Heart left ventricle (tissue), 16 donors: ENCODE measurements at regions of chr1 and their contacts with region 1.

Region 1: DNA sequence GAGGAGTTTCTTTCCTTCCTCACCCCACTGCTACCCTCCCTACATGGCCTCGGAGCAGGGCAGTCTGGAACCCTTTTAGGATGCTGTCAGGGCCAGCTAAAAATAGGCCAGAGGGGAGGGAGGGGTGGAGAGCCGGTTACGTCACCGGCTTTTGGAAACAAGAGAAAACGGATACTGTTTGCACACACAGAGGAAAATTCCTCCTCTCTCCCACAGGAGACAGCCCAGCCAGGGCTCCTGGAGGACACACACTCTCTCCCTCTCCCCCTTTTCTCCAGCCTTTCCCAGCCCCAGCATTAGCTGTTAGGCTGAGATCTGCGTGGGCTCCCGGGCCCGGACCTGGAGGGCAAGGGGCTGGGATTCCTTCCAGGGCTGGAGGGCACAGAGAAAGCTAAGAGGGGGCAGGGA is 20.0 kb upstream of the ALDH4A1 start:
- DNase-seq: peak; percentile 83 to 91 (median 90)
- ATAC-seq: peak; percentile 86 to 89 (median 88)
- H3K4me3 ChIP-seq: peak overlapping the region in 8 of 12 donors; percentile 4 to 40 (median 18)
- H3K27ac ChIP-seq: peak overlapping the region; percentile 57 to 97 (median 92)
- H3K4me1 ChIP-seq: peaks cover 17 to 59% (median 50%) of the 10 kb centered on the region in 12 donors
- H3K27me3 ChIP-seq: no peaks in the 10 kb centered on the region
- CTCF ChIP-seq: peak in 5 of 12 donors; percentile 15 to 32 (median 19)
- POLR2A ChIP-seq: peak in 1 of 2 donors; percentile 78

Region 2: DNA sequence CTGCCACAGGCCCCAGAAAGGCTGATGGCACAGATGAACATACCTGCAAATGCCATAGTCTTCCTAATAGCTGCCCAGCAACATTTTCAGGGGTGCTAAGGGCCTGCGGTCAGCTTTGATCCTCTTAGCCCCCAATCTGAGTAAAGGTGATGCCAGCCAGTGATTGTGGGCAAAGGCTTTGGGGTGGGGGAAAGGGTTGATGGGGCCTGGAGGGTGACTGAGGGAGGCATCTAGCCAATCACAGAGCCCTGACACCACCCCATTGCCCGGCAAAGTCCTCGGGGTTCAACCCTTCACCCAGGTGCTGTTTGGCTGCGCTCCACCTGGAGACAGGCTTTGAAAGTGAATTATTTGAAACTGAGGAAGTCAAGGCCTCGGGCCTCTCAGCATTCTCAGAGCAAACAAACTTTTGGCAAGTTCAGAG is 255.9 kb before region 1 on chr1:
- intact Hi-C with region 1: no loop called
- DNase-seq: no peak
- ATAC-seq: no peak
- H3K4me3 ChIP-seq: no peak overlapping the region
- H3K27ac ChIP-seq: no peak overlapping the region
- H3K4me1 ChIP-seq: no peaks in the 10 kb centered on the region
- H3K27me3 ChIP-seq: peaks cover 3 to 64% (median 11%) of the 10 kb centered on the region in 9 donors
- CTCF ChIP-seq: no peak
- POLR2A ChIP-seq: no peak

Region 3: GRCh38 chr1:18941221-18942141 is 19.2 kb after region 1 on chr1:
- intact Hi-C with region 1: loop called in 1 of 10 experiments (anchors 2 kb)
- DNase-seq: peak in 1 of 5 donors; percentile 51
- ATAC-seq: peak; percentile 50 to 83 (median 56)
- H3K4me3 ChIP-seq: no peak overlapping the region
- H3K27ac ChIP-seq: peak overlapping the region in 11 of 12 donors; percentile 54 to 80 (median 72)
- H3K4me1 ChIP-seq: peaks cover 12 to 76% (median 61%) of the 10 kb centered on the region in 12 donors
- H3K27me3 ChIP-seq: no peaks in the 10 kb centered on the region
- CTCF ChIP-seq: no peak
- POLR2A ChIP-seq: no peak

Region 4: DNA sequence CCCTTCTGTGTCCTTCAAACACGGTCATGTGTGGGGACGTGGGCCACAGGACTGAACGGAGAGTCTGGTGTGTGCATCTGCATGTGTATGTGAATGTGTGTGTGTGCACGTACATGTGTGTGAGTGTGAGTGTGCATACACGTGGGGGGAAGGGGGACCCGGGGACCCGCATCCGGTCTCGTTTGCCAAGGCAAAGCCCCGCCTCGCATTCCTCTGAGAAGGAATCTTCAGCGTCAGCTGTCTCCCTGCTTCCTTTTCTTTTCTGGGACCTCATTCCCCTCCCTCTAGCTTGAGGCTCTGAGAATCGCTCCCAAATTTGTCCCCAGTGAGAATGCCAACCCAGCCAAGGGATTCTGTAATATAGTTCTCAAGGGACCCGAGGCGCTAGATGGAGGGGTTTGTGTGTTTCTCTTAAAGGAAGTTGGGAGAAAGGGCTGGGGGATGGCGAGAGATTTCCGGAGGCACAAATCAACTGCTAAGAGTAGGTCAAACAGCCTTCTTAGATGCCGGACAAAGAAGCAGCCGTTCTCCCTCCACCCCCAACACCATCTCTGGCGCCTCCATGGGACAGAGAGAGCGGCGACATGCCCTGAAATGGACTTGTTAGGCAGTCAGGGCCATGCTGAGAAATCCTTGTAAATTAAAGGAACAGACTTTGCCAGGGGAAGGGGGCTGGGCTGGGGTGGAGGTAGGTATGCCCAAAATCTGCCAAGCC is 27.5 kb after region 1 on chr1:
- intact Hi-C with region 1: loop called in 6 of 10 experiments (anchors 2 to 5 kb)
- DNase-seq: peak in 2 of 5 donors; percentile 44 to 71
- ATAC-seq: peak in 3 of 4 donors; percentile 21 to 52 (median 32)
- H3K4me3 ChIP-seq: peak overlapping the region in 11 of 12 donors; percentile 7 to 61 (median 48)
- H3K27ac ChIP-seq: peak overlapping the region; percentile 69 to 96 (median 88)
- H3K4me1 ChIP-seq: peaks cover 5 to 96% (median 69%) of the 10 kb centered on the region in 12 donors
- H3K27me3 ChIP-seq: no peaks in the 10 kb centered on the region
- CTCF ChIP-seq: peak in 4 of 12 donors; percentile 9 to 38 (median 27)
- POLR2A ChIP-seq: no peak

Region 5: GRCh38 chr1:18956369-18957135 is 34.2 kb after region 1 on chr1 and contains the start of gene IFFO2:
- intact Hi-C with region 1: loop called in 7 of 10 experiments (anchors 2 to 5 kb)
- DNase-seq: peak; percentile 98 to 99 (median 98)
- ATAC-seq: peak; percentile 98 to 99 (median 98)
- H3K4me3 ChIP-seq: peak within 1 kb of the TSS; percentile 67 to 95 (median 79)
- H3K27ac ChIP-seq: peak within 1 kb of the TSS in 11 of 12 donors; percentile 54 to 88 (median 76)
- H3K4me1 ChIP-seq: peaks cover 0 to 43% (median 28%) of the 10 kb centered on the region in 12 donors
- H3K27me3 ChIP-seq: no peaks in the 10 kb centered on the region
- CTCF ChIP-seq: no peak
- POLR2A ChIP-seq: peak; percentile 88 to 96
- total RNA-seq, gene IFFO2: 3.1 to 9.0 (median 5.3) TPM